ENCODE measurements at regions of chr4 and their contacts with region 1.

Region 1: DNA sequence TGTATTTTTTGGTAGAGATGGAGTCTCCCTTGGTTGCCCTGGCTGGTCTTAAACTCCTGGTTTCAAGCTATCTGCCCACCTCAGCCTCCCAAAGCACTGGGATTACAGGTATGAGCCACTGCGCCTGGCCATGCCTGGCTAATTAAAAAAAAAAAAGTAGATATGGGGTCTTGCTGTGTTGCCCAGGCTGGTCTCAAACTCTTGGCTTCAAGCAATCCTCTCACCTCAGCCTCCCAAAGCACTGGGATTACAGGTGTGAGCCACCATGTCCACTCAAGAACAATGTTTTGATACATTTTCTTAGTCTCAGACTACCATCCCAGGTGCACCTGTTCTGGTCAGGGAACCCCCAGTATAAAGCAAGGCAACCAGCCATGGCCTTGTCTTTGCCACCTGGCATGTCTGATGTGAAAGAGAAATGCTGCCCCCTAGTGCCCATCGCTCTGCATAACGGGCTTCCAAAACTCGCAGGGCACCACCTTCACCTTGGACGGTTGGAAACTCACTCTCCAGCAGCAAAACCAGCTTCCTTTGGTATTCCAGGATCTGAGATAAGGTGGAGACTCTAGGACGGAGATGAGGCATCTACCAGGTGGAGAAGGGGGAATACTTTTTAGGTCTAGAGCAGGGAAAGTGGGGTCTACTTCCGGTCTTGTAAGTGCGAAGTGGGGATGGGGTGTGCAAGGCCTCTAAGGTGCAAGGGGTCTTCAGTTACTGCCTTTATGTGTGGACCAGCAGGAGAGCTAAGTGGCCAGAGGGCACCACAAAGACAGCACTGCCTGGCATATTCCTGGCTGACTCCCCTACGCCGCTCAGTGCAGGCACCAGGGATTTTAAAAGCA is 47.7 kb upstream of the AFAP1 start:
- DNase-seq: peak; percentile 88
- ATAC-seq: peak; percentile 89
- H3K4me3 Mint-ChIP-seq: no peak overlapping the region
- H3K27ac Mint-ChIP-seq: no peak overlapping the region
- H3K4me1 Mint-ChIP-seq: peaks cover 3% of the 10 kb centered on the region
- H3K27me3 Mint-ChIP-seq: no peaks in the 10 kb centered on the region

Region 2: GRCh38 chr4:7192252-7193029 is 794.9 kb before region 1 on chr4 and contains the start of gene SORCS2:
- CTCF ChIA-PET with region 1: no interaction called
- POLR2A ChIA-PET with region 1: no interaction called
- intact Hi-C with region 1: loop called (anchors 10 kb)
- DNase-seq: peak; percentile 74
- ATAC-seq: peak; percentile 85
- H3K4me3 Mint-ChIP-seq: no peak within 1 kb of the TSS
- H3K27ac Mint-ChIP-seq: no peak within 1 kb of the TSS
- H3K4me1 Mint-ChIP-seq: no peaks in the 10 kb centered on the region
- H3K27me3 Mint-ChIP-seq: peaks cover 45% of the 10 kb centered on the region
- total RNA-seq, gene SORCS2: 0.04 TPM in 1 of 2 experiments, not detected in the other

Region 3: GRCh38 chr4:7719354-7720174 is 267.8 kb before region 1 on chr4:
- CTCF ChIA-PET with region 1: no interaction called
- POLR2A ChIA-PET with region 1: no interaction called
- intact Hi-C with region 1: loop called in 1 of 2 experiments (anchors 1 kb)
- DNase-seq: peak; percentile 82
- ATAC-seq: peak; percentile 82
- H3K4me3 Mint-ChIP-seq: no peak overlapping the region
- H3K27ac Mint-ChIP-seq: no peak overlapping the region
- H3K4me1 Mint-ChIP-seq: no peaks in the 10 kb centered on the region
- H3K27me3 Mint-ChIP-seq: peaks cover 11% of the 10 kb centered on the region

Region 4: DNA sequence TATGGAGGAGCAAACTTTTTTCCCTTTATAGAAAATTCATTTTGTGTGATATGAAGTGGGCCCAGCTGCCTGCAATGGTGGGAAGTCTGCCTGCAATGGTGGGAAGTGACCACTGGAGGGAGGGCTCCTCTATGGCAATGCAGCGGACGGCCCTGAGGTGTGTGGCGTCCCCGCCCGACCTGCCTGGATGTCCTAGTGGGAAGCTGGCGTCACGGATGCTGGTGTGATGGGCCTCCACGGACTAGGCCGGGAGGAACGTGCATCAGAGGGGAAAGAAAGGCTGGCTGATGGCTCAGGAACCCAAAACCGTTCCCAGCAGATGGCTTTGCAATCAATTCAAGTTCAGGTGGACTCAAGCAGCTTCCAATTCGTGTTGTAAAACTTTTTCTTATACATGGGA is 225.6 kb before region 1 on chr4:
- CTCF ChIA-PET with region 1: interaction called, 6 read pairs
- POLR2A ChIA-PET with region 1: no interaction called
- intact Hi-C with region 1: loop called (anchors 2 to 5 kb)
- DNase-seq: peak; percentile 73
- ATAC-seq: peak; percentile 42
- H3K4me3 Mint-ChIP-seq: no peak overlapping the region
- H3K27ac Mint-ChIP-seq: peak overlapping the region; percentile 63
- H3K4me1 Mint-ChIP-seq: peaks cover 31% of the 10 kb centered on the region
- H3K27me3 Mint-ChIP-seq: no peaks in the 10 kb centered on the region

Region 5: DNA sequence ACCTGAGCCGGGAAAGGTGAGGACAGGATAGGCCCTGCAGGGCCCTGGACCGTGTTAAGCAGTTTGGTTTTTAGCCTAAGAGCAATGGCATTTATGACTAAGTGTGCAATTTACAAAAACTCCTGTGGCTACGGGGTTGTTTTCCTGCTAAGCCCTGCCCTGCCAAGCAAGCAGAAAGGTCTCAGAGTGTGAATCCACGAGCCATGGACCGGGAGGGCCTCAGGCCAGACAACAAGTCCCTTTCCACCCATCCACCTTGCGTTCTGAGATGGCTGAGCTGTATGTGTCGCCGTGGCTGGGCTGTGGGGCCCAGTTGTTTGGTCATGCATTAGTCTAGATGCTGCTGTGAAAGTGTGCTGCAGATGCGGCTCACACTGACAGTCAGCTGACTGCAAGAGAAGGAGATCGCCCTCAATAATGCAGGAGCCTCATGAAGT is 13.8 kb before region 1 on chr4:
- CTCF ChIA-PET with region 1: interaction called, 12 read pairs
- POLR2A ChIA-PET with region 1: no interaction called
- intact Hi-C with region 1: no loop called
- DNase-seq: peak; percentile 41
- ATAC-seq: peak; percentile 10
- H3K4me3 Mint-ChIP-seq: no peak overlapping the region
- H3K27ac Mint-ChIP-seq: peak overlapping the region; percentile 52
- H3K4me1 Mint-ChIP-seq: peaks cover 44% of the 10 kb centered on the region
- H3K27me3 Mint-ChIP-seq: no peaks in the 10 kb centered on the region

Measured in activated CD4-positive, alpha-beta T cell treated with anti-CD3 and anti-CD28 coated beads for 36 hours (primary cell).